Heart right ventricle (tissue), 16 donors: ENCODE measurements at regions of chr3 and their contacts with region 1.

Region 1: GRCh38 chr3:54557541-54558419 is 370.1 kb downstream of the LRTM1 start:
- DNase-seq: no peak
- ATAC-seq: no peak
- H3K4me3 ChIP-seq: no peak overlapping the region
- H3K27ac ChIP-seq: no peak overlapping the region
- H3K4me1 ChIP-seq: no peaks in the 10 kb centered on the region
- H3K27me3 ChIP-seq: no peaks in the 10 kb centered on the region
- CTCF ChIP-seq: no peak

Region 2: DNA sequence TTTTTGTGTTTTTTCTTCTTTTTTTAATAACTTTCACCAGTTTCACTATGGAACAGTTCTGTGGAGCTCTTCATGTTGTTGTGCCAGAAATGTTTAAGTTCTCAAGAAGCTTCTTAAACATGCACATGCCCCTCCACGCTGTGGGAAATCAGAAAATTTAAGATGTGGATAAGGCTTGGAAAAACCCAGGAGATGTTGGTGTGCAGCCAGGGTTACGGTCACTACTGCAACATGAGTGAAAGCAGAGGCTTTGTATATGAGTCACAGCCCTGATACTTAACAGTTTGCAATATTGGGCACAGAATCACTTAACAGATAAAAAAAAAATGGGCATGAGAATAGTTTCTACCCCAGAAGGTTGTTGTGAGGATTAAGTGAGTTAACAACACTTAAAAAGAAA is 29.8 kb before region 1 on chr3:
- intact Hi-C with region 1: loop called in 1 of 10 experiments (anchors 2 kb)
- DNase-seq: no peak
- ATAC-seq: no peak
- H3K4me3 ChIP-seq: no peak overlapping the region
- H3K27ac ChIP-seq: no peak overlapping the region
- H3K4me1 ChIP-seq: peaks cover 0 to 7% (median 0%) of the 10 kb centered on the region in 9 donors
- H3K27me3 ChIP-seq: no peaks in the 10 kb centered on the region
- CTCF ChIP-seq: no peak

Region 3: GRCh38 chr3:54631516-54632325 is 73.9 kb after region 1 on chr3:
- intact Hi-C with region 1: no loop called
- DNase-seq: no peak
- ATAC-seq: no peak
- H3K4me3 ChIP-seq: no peak overlapping the region
- H3K27ac ChIP-seq: no peak overlapping the region
- H3K4me1 ChIP-seq: no peaks in the 10 kb centered on the region
- H3K27me3 ChIP-seq: peaks cover 0 to 5% (median 0%) of the 10 kb centered on the region in 7 donors
- CTCF ChIP-seq: no peak